HEK293 (cell line): ENCODE measurements at regions of chrX and their contacts with region 1.

Region 1: DNA sequence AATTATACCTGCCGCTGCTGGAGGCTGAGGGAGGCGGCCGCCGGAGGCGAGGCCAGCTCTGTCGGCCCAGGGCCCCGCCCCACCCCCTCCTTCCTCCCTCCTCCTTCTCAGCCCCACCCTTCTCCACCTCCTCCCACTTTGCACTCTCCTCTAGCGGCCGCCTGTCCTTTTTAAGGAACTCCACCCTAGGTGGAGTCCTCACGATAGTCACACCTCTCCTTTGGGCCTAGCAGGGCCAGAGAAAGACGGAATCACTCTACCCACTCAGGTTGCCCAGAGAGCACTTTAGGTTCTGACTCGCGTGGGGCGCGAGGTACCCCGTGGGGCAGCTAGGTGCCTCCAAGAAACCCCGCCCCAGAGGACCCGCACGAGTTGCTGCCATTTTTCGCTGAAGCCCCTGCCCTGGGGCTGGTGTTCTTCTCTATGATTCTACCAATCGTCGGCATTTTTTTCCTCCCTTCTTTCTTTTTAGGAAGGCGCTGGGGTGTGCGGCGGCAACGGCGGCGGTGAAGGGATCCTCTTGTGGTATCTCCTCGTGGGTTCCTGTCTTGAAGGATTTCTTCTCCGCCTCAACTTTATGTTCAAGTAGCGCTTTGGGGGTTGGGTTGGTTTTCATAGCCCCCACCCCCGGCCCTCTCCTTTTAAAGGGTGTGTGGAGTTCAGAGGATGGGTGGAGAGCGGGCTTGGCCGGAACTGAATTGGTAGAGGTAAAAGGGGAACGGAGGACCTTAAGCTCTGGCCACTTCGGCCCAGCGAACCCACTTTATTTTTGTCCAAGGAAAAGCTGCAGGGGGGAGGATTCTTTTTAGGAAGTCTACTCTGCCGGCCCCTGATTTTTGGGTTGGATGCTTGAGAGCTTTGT is at the start of gene KLF8:
- H3K4me3 ChIP-seq: peak within 1 kb of the TSS; percentile 31
- H3K27ac ChIP-seq: no peak within 1 kb of the TSS
- H3K4me1 ChIP-seq: no peaks in the 10 kb centered on the region
- CTCF ChIP-seq: no peak

Region 2: DNA sequence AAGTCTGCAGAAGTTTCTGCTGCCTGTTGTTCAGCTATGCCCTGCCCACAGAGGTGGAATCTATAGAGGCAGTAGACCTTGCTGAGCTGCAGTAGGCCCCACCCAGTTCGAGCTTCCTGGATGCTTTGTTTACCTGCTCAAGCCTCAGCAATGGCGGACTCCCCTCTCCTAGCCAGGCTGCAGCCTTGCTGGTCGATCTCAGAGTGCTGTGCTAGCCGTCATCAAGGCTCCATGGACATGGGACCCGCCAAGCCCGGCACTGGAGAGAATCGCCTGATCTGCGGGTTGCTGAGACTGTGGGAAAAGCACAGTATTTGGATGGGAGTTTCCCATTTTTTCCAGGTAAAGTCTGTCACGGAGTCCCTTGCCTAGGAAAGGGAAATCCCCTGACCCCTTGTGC is 125.2 kb before region 1 on chrX:
- CTCF ChIA-PET with region 1: no interaction called
- POLR2A ChIA-PET with region 1: no interaction called
- H3K4me3 ChIP-seq: no peak overlapping the region
- H3K27ac ChIP-seq: no peak overlapping the region
- H3K4me1 ChIP-seq: no peaks in the 10 kb centered on the region
- CTCF ChIP-seq: no peak

Region 3: GRCh38 chrX:56248492-56248891 is 16.0 kb after region 1 on chrX:
- CTCF ChIA-PET with region 1: interaction called, 10 read pairs
- POLR2A ChIA-PET with region 1: no interaction called
- H3K4me3 ChIP-seq: no peak overlapping the region
- H3K27ac ChIP-seq: no peak overlapping the region
- H3K4me1 ChIP-seq: no peaks in the 10 kb centered on the region
- CTCF ChIP-seq: peak; percentile 52; the same call in 1 of the 2 replicates